Left lung (tissue), 14 donors: ENCODE measurements at regions of chr7 and their contacts with region 1.

Region 1: GRCh38 chr7:73446682-73447081 is 13.1 kb downstream of the FZD9 start:
- DNase-seq: no peak
- ATAC-seq: no peak
- H3K4me3 ChIP-seq: no peak overlapping the region
- H3K27ac ChIP-seq: no peak overlapping the region
- H3K4me1 ChIP-seq: peaks cover 0 to 36% of the 10 kb centered on the region in 2 donors
- H3K27me3 ChIP-seq: no peaks in the 10 kb centered on the region
- CTCF ChIP-seq: no peak

Region 2: GRCh38 chr7:73342645-73343044 is 104.0 kb before region 1 on chr7:
- intact Hi-C with region 1: loop called in 1 of 2 experiments (anchors 10 kb)
- DNase-seq: peak in 2 of 4 donors; percentile 59 to 77
- ATAC-seq: peak; percentile 86
- H3K4me3 ChIP-seq: no peak overlapping the region
- H3K27ac ChIP-seq: no peak overlapping the region
- H3K4me1 ChIP-seq: no peaks in the 10 kb centered on the region
- H3K27me3 ChIP-seq: peaks cover 0 to 7% of the 10 kb centered on the region in 2 donors
- CTCF ChIP-seq: no peak